Activated CD4-positive, alpha-beta memory T cell treated with anti-CD3 and anti-CD28 coated beads for 36 hours (primary cell): ENCODE measurements at regions of chr10 and their contacts with region 1.

Region 1: GRCh38 chr10:71985542-71986250 is 21.5 kb downstream of the CHST3 start:
- DNase-seq: peak; percentile 47
- H3K4me3 Mint-ChIP-seq: peak overlapping the region; percentile 17
- H3K27ac Mint-ChIP-seq: peak overlapping the region; percentile 74
- H3K4me1 Mint-ChIP-seq: peaks cover 21% of the 10 kb centered on the region
- H3K27me3 Mint-ChIP-seq: peaks cover 7% of the 10 kb centered on the region

Region 2: DNA sequence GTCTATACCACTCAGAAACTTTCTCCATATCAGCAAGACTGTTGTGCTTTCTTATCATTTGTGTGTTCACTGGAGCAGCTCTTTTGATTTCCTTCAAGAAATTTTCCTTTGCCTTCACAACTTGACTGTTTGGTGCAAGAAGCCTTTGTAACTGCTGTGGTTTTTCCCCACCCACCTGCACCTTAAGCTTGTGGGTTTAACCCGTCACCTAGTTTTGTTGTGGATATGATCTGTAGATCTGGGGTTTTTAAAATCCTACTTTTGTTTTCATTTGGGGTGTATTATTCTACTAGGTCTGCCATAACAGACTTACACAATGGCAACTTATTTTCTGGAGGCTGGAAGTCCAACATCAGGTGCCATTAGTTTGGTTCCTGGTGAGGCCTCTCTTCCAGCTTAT is 52.0 kb before region 1 on chr10:
- CTCF ChIA-PET with region 1: interaction called, 3 read pairs
- POLR2A ChIA-PET with region 1: no interaction called
- intact Hi-C with region 1: loop called (anchors 1 kb)
- DNase-seq: peak; percentile 80
- H3K4me3 Mint-ChIP-seq: no peak overlapping the region
- H3K27ac Mint-ChIP-seq: no peak overlapping the region
- H3K4me1 Mint-ChIP-seq: peaks cover 20% of the 10 kb centered on the region
- H3K27me3 Mint-ChIP-seq: peaks cover 3% of the 10 kb centered on the region

Region 3: DNA sequence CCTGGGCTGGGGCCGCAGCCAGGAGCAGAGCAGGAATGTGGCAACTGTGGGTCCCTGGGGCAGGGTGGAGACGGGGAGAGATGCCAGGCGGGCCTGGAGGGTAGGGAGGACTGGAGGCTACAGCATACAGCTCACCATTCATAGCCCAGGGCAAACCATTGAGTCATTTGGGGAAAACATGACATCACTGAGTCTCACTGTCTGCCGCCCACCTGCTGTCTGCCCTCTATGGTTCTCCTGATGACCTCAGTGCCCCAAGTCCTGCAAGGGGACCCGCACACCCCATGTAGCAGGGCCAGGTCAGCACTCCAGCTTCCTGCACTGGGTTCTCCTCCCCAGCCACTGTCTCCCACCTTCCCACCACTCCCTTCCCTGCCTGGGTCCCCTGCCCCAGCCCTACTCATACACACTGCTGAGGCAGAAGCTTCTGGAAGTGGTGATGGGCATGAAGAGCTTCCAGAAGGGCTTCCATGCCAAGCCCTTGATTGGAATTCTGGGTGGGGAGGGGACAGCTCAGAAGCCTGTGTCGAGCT is 11.1 kb before region 1 on chr10:
- CTCF ChIA-PET with region 1: interaction called, 12 read pairs
- POLR2A ChIA-PET with region 1: interaction called, 3 read pairs
- intact Hi-C with region 1: loop called (anchors 1 kb)
- DNase-seq: peak; percentile 81
- H3K4me3 Mint-ChIP-seq: no peak overlapping the region
- H3K27ac Mint-ChIP-seq: peak overlapping the region; percentile 38
- H3K4me1 Mint-ChIP-seq: peaks cover 23% of the 10 kb centered on the region
- H3K27me3 Mint-ChIP-seq: no peaks in the 10 kb centered on the region